CD4-positive, alpha-beta T cell (primary cell): ENCODE measurements at regions of chr6 and their contacts with region 1.

Region 1: DNA sequence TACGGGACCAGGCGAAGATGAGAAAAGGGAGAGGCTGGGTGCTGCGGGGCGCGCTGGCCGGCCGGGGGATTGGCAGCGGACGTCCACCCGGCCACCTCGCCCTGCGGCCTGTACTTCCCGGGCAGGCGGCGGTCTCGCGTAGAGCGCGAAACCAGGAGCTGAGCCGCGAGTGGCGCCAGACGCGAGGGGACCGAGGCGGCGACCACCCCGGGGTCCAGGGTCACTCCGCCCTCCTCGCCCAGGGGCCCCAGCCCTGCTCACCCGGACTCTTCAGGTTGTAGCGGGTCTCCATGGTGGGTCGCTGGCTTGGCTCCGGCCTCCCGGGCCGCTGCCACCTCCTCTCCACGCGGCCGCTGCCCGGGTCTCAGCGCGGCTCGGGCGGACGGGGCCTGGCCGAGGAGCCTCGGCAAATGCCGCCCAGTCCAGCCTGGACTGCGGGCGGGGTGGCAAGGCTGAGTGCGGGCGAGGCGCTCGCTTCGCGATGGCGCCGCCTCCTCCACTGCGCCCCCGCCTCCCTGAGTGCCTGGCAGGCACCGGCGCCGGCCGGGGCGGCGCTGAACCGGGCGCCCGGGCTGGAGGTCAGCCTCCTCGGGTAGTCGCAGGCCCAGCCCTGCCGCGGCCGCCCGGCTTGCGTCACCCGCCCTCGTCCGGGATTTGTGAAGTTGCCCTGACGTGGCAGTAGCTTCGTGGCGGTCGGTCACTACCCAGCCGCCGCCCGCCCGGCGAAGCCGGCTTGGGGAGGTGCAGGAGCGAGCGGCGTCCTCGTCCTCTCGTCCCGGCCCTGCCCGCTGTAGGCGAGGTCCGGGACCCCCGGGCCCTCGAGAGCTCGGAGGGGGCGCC is at the start of gene UBE2J1:
- DNase-seq: peak; percentile 42 to 90 (median 64)
- ATAC-seq: peak; percentile 80
- H3K4me3 ChIP-seq: peak within 1 kb of the TSS; percentile 71
- H3K4me3 Mint-ChIP-seq: peak within 1 kb of the TSS; percentile 99
- H3K27ac ChIP-seq: peak within 1 kb of the TSS; percentile 69 to 71
- H3K27ac Mint-ChIP-seq: peak within 1 kb of the TSS; percentile 92
- H3K4me1 ChIP-seq: peaks cover 33% of the 10 kb centered on the region
- H3K4me1 Mint-ChIP-seq: peaks cover 69% of the 10 kb centered on the region
- H3K27me3 ChIP-seq: no peaks in the 10 kb centered on the region
- H3K27me3 Mint-ChIP-seq: no peaks in the 10 kb centered on the region
- CTCF ChIP-seq: no peak
- total RNA-seq, gene UBE2J1: 34.7 to 34.9 TPM

Region 2: DNA sequence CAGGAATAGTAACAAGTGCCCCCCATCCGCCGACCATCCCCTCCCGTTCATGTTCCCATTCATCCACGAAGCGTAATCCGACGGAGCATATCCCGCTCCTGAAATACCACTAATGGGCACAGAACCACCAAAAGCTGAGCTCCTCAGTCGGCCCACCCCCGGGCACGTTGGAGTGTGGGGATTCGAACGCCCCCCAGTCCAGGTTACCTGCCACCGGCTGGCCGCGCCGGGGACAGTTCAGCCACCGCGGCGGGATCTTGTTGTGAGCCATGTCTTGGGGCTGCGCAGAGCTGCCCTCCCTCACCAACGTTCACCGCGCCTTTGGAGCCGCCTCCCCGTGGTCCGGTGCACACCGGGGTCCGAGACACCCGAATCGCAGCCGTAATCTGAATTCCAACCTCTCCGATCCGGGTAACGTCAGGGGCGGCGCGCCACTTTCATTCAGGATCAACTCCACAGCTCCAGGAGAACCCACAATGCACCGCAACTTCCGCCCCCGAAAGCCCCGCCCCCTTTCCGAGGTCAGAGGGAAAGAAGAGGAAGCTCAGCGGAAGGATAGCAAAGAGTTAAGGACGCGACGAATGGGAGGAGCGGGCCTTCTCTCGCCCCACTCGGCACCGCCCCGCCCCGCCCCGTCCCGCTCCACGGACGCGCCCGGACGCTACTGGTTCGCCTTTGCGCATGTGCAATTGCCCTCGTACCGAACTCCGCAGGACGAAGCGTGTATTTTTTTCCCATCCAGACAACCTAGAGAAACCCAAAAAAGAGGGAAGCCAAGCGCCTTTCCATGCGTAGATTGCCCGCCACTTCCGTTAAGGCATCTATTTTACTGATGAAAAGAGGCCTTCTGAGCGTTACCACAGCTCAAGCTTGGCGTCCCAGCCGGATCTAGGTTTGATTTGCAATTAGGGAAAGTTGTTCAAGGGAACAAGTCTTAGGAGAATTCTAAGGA is 389.1 kb before region 1 on chr6 and contains the start of gene RNGTT:
- CTCF ChIA-PET with region 1: no interaction called
- POLR2A ChIA-PET with region 1: interaction called, 12 read pairs
- intact Hi-C with region 1: loop called (anchors 5 to 10 kb)
- DNase-seq: peak; percentile 94 to 99 (median 97)
- ATAC-seq: peak; percentile 98
- H3K4me3 ChIP-seq: peak within 1 kb of the TSS; percentile 88
- H3K4me3 Mint-ChIP-seq: peak within 1 kb of the TSS; percentile 96
- H3K27ac ChIP-seq: peak within 1 kb of the TSS; percentile 60 to 65
- H3K27ac Mint-ChIP-seq: peak within 1 kb of the TSS; percentile 82
- H3K4me1 ChIP-seq: peaks cover 15% of the 10 kb centered on the region
- H3K4me1 Mint-ChIP-seq: peaks cover 63% of the 10 kb centered on the region
- H3K27me3 ChIP-seq: no peaks in the 10 kb centered on the region
- H3K27me3 Mint-ChIP-seq: no peaks in the 10 kb centered on the region
- CTCF ChIP-seq: no peak
- total RNA-seq, gene RNGTT: 11.6 to 12.4 TPM

Region 3: DNA sequence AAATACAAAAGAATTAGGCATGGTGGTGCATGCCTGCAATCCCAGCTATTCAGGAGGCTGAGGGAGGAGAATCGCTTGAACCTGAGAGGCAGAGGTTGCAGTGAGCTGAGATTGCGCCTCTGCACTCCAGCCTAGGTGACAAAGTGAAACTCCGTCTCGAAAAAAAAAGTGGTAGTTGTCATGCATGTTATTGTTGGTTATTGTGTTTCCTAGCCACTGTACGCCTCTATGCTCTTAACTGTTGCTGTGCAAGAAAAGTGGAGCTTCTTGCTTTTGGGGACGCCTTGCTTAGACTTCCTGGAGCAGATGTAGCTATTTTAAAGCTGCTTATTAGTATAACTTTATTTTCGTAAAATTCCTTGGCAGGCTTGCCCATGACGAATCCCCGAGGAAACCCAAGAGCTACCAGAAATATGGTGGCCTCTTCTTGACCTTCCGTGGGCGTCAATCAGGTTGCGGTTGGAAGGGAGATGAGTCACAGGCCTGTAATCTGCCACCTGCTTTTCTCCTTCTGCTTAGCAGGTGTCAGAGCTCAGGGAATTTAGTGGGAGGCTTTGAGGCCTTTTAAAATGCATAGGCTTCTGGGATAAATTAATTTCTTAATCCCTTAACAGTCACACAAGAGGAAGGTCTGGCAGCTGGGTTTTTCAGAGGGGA is 54.7 kb before region 1 on chr6:
- CTCF ChIA-PET with region 1: interaction called, 3 read pairs
- POLR2A ChIA-PET with region 1: interaction called, 25 read pairs
- intact Hi-C with region 1: loop called in 1 of 2 experiments (anchors 5 kb)
- DNase-seq: peak in 13 of 14 experiments; percentile 36 to 85 (median 46)
- ATAC-seq: peak; percentile 69
- H3K4me3 ChIP-seq: no peak overlapping the region
- H3K4me3 Mint-ChIP-seq: peak overlapping the region; percentile 50
- H3K27ac ChIP-seq: peak overlapping the region in 1 of 2 donors; percentile 64
- H3K27ac Mint-ChIP-seq: peak overlapping the region; percentile 86
- H3K4me1 ChIP-seq: peaks cover 28% of the 10 kb centered on the region
- H3K4me1 Mint-ChIP-seq: peaks cover 26% of the 10 kb centered on the region
- H3K27me3 ChIP-seq: no peaks in the 10 kb centered on the region
- H3K27me3 Mint-ChIP-seq: no peaks in the 10 kb centered on the region
- CTCF ChIP-seq: no peak

Region 4: GRCh38 chr6:89371849-89372505 is 19.5 kb after region 1 on chr6:
- CTCF ChIA-PET with region 1: interaction called, 29 read pairs
- POLR2A ChIA-PET with region 1: interaction called, 13 read pairs
- intact Hi-C with region 1: loop called in 1 of 2 experiments (anchors 2 kb)
- DNase-seq: peak; percentile 64 to 89 (median 76)
- ATAC-seq: peak; percentile 65
- H3K4me3 ChIP-seq: no peak overlapping the region
- H3K4me3 Mint-ChIP-seq: no peak overlapping the region
- H3K27ac ChIP-seq: peak overlapping the region in 1 of 2 donors; percentile 32
- H3K27ac Mint-ChIP-seq: peak overlapping the region; percentile 79
- H3K4me1 ChIP-seq: peaks cover 17% of the 10 kb centered on the region
- H3K4me1 Mint-ChIP-seq: peaks cover 27% of the 10 kb centered on the region
- H3K27me3 ChIP-seq: no peaks in the 10 kb centered on the region
- H3K27me3 Mint-ChIP-seq: no peaks in the 10 kb centered on the region
- CTCF ChIP-seq: peak; percentile 97

Region 5: DNA sequence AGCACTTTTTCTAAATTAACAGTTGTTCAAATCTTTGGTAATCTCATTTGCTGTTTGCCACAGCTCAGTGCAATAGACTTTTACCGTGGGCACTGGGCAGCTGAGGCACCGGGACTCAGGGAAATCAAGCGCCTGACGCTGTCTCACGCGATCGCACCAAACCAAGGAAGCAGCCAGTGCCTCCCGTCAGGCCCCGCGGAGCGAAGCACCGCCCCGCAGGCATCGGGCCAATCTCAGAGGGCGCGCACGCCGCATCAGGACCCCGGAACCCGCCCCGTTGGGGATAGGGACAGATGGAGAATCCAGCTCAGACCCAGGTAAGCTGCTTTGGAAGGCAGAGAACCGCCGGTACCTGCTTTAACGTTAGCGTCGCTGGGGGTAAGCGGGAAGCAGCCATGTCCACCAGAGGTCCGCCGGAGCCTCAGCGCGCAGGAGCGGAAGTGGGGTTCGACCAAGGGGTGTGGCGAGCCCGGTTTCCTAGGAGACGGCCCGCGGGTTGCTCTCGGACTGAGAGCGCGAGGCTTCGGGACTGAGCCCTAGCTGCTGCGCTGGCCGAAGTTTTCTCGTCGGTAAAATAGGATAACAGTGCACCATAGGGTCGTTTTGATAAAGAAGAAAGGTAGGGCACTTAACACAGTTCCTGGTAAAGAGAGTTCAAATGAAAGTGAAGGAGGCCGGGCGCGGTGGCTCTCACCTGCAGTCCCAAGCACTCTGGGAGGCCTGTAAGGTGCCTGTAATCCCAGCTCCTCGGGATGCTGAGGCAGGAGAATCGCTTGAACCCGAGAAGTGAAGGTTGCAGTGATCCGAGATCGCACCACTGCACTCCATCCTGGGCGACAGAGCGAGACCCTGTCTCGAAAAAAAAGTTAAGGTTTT is 286.1 kb after region 1 on chr6 and contains the start of gene LYRM2:
- CTCF ChIA-PET with region 1: no interaction called
- POLR2A ChIA-PET with region 1: interaction called, 12 read pairs
- intact Hi-C with region 1: no loop called
- DNase-seq: peak; percentile 80 to 95 (median 86)
- ATAC-seq: peak; percentile 95
- H3K4me3 ChIP-seq: peak within 1 kb of the TSS; percentile 93
- H3K4me3 Mint-ChIP-seq: peak within 1 kb of the TSS; percentile 97
- H3K27ac ChIP-seq: peak within 1 kb of the TSS; percentile 92 to 99
- H3K27ac Mint-ChIP-seq: peak within 1 kb of the TSS; percentile 98
- H3K4me1 ChIP-seq: peaks cover 15% of the 10 kb centered on the region
- H3K4me1 Mint-ChIP-seq: peaks cover 35% of the 10 kb centered on the region
- H3K27me3 ChIP-seq: no peaks in the 10 kb centered on the region
- H3K27me3 Mint-ChIP-seq: no peaks in the 10 kb centered on the region
- CTCF ChIP-seq: no peak
- total RNA-seq, gene LYRM2: 12.3 to 16.3 TPM

Region 6: DNA sequence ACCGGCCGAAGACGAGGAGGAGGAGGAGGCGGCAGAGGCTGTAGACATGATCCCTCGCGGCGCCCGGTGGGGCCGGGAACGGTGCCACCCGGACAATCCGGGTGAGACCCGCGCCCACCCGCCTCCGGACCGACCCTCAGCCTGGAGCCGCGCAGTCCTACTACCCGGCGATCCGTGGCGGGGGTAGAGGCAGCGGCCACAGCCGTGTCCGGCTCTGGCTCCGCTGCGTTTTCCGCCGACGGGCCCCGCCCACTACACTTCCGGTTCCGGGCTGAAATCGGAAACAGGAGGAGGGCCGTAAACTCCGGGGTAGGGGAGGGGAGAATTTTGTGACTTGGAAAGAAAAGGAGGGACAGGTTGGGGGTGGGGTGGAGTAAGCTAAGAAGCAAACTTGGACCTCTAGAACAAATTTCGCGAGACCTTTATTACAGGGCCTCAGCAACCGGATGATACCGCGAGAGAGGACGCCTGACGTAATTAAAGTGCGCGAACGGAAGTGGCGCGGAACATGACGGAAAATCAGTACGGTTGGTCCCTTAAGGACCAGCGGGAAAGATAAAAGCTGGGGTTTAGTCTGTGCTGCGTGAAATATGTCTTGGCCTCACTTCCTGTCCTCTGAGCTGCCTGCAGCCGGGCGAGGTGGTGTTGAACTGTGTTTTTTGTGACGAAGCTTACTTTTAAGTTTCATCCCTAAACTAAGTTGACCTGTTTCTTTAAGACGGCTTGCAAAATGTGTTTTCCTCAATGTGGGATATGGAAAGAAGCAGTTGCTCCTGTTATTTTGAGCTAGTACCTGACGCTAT is 1234.5 kb after region 1 on chr6 and contains the start of gene MAP3K7:
- CTCF ChIA-PET with region 1: no interaction called
- POLR2A ChIA-PET with region 1: no interaction called
- intact Hi-C with region 1: loop called in 1 of 2 experiments (anchors 10 kb)
- DNase-seq: peak; percentile 80 to 97 (median 92)
- ATAC-seq: peak; percentile 85
- H3K4me3 ChIP-seq: peak within 1 kb of the TSS; percentile 94
- H3K4me3 Mint-ChIP-seq: peak within 1 kb of the TSS; percentile 98
- H3K27ac ChIP-seq: peak within 1 kb of the TSS; percentile 97 to 99
- H3K27ac Mint-ChIP-seq: peak within 1 kb of the TSS; percentile 96
- H3K4me1 ChIP-seq: peaks cover 15% of the 10 kb centered on the region
- H3K4me1 Mint-ChIP-seq: peaks cover 50% of the 10 kb centered on the region
- H3K27me3 ChIP-seq: peaks cover 0 to 9% of the 10 kb centered on the region in 2 experiments
- H3K27me3 Mint-ChIP-seq: peaks cover 9% of the 10 kb centered on the region
- CTCF ChIP-seq: no peak
- total RNA-seq, gene MAP3K7: 9.0 to 9.3 TPM